ENCODE measurements at regions of chr5 and their contacts with region 1.

Region 1: GRCh38 chr5:126776497-126777256 is at the start of gene LMNB1:
- DNase-seq: peak; percentile 97
- ATAC-seq: peak; percentile 75
- H3K4me3 Mint-ChIP-seq: peak within 1 kb of the TSS; percentile 96
- H3K27ac Mint-ChIP-seq: peak within 1 kb of the TSS; percentile 98
- H3K4me1 Mint-ChIP-seq: peaks cover 39% of the 10 kb centered on the region
- H3K27me3 Mint-ChIP-seq: no peaks in the 10 kb centered on the region
- total RNA-seq, gene LMNB1: 384 to 396 TPM

Region 2: DNA sequence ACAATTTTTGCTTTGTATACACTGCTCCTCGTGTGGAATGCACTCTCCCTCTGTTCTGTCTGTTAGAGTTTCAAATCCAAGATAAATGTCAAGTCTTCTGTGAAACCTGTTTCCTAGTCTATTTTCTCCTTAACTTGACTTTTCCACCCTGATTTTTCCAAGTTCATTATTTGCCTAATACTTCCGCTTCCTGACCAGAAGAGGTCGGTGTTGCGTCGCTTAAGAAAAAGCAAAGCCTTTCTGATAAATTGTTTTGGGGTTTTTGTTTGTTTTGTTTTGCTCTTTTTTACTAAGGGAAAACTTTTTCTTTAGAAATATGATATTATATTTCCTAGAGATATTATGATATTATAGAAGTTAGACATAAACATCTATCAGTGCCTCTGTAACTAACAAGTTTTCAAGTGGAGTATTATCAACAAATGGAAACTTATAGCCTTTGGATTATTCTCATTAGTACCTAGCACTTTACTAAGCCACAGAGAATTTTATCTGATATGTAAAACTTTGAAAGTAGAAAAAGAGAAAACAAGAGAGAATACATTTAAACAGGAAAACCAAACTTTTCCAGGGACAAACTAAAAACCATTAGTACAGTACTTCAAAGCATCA is 120.2 kb before region 1 on chr5:
- CTCF ChIA-PET with region 1: interaction called, 26 read pairs
- POLR2A ChIA-PET with region 1: interaction called, 4 read pairs
- DNase-seq: peak; percentile 42
- ATAC-seq: no peak
- H3K4me3 Mint-ChIP-seq: no peak overlapping the region
- H3K27ac Mint-ChIP-seq: no peak overlapping the region
- H3K4me1 Mint-ChIP-seq: peaks cover 6% of the 10 kb centered on the region
- H3K27me3 Mint-ChIP-seq: no peaks in the 10 kb centered on the region

Region 3: GRCh38 chr5:126686451-126687126 is 90.1 kb before region 1 on chr5:
- CTCF ChIA-PET with region 1: interaction called, 250 read pairs
- POLR2A ChIA-PET with region 1: interaction called, 132 read pairs
- DNase-seq: no peak
- ATAC-seq: no peak
- H3K4me3 Mint-ChIP-seq: no peak overlapping the region
- H3K27ac Mint-ChIP-seq: no peak overlapping the region
- H3K4me1 Mint-ChIP-seq: peaks cover 21% of the 10 kb centered on the region
- H3K27me3 Mint-ChIP-seq: no peaks in the 10 kb centered on the region

Region 4: GRCh38 chr5:126736141-126736540 is 40.5 kb before region 1 on chr5:
- CTCF ChIA-PET with region 1: interaction called, 28 read pairs
- POLR2A ChIA-PET with region 1: interaction called, 49 read pairs
- DNase-seq: no peak
- ATAC-seq: no peak
- H3K4me3 Mint-ChIP-seq: no peak overlapping the region
- H3K27ac Mint-ChIP-seq: no peak overlapping the region
- H3K4me1 Mint-ChIP-seq: peaks cover 3% of the 10 kb centered on the region
- H3K27me3 Mint-ChIP-seq: peaks cover 2% of the 10 kb centered on the region

Region 5: GRCh38 chr5:126753227-126753626 is 23.4 kb before region 1 on chr5:
- CTCF ChIA-PET with region 1: interaction called, 84 read pairs
- POLR2A ChIA-PET with region 1: interaction called, 247 read pairs
- DNase-seq: no peak
- ATAC-seq: no peak
- H3K4me3 Mint-ChIP-seq: no peak overlapping the region
- H3K27ac Mint-ChIP-seq: no peak overlapping the region
- H3K4me1 Mint-ChIP-seq: peaks cover 46% of the 10 kb centered on the region
- H3K27me3 Mint-ChIP-seq: no peaks in the 10 kb centered on the region

Region 6: GRCh38 chr5:126801992-126802294 is 25.3 kb after region 1 on chr5:
- CTCF ChIA-PET with region 1: interaction called, 51 read pairs
- POLR2A ChIA-PET with region 1: interaction called, 14 read pairs
- DNase-seq: no peak
- ATAC-seq: no peak
- H3K4me3 Mint-ChIP-seq: no peak overlapping the region
- H3K27ac Mint-ChIP-seq: no peak overlapping the region
- H3K4me1 Mint-ChIP-seq: peaks cover 40% of the 10 kb centered on the region
- H3K27me3 Mint-ChIP-seq: no peaks in the 10 kb centered on the region

Region 7: DNA sequence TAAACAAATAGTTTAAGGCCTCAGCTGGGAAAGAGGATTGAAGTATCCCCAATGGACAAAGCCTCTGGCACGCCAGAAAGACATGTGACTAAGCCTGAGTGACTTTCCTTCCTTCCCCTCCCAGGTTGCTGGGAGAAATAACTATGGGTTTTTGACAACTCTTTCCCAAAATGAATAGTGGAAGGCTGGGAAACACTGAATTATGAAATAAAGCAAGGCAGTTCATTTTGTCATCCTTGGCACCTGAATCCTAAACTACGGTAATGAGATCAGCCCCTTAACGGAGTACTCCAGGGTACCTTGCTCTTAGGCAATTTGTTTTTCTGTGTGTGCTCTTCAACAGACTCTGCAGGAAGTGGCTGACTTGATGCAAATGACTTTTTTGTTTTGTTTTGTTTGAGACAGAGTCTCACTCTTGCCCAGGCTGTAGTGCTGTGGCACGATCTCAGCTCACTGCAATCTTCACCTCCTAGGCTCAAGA is 75.5 kb after region 1 on chr5:
- CTCF ChIA-PET with region 1: interaction called, 17 read pairs
- POLR2A ChIA-PET with region 1: interaction called, 87 read pairs
- DNase-seq: peak; percentile 50
- ATAC-seq: peak; percentile 51
- H3K4me3 Mint-ChIP-seq: peak overlapping the region; percentile 72
- H3K27ac Mint-ChIP-seq: peak overlapping the region; percentile 96
- H3K4me1 Mint-ChIP-seq: peaks cover 56% of the 10 kb centered on the region
- H3K27me3 Mint-ChIP-seq: no peaks in the 10 kb centered on the region